PC-9 (cell line): ENCODE measurements at regions of chr12 and their contacts with region 1.

Region 1: GRCh38 chr12:130849561-130850417 is 10.7 kb upstream of the STX2 start:
- DNase-seq: peak; percentile 41 to 70
- H3K4me3 ChIP-seq: no peak overlapping the region
- H3K27ac ChIP-seq: peak overlapping the region; percentile 70
- H3K4me1 ChIP-seq: peaks cover 20% of the 10 kb centered on the region
- H3K27me3 ChIP-seq: no peaks in the 10 kb centered on the region
- CTCF ChIP-seq: no peak

Region 2: GRCh38 chr12:130775953-130776856 is 73.6 kb before region 1 on chr12:
- CTCF ChIA-PET with region 1: interaction called, 10 read pairs
- POLR2A ChIA-PET with region 1: no interaction called
- intact Hi-C with region 1: no loop called
- DNase-seq: peak; percentile 39 to 49
- H3K4me3 ChIP-seq: no peak overlapping the region
- H3K27ac ChIP-seq: no peak overlapping the region
- H3K4me1 ChIP-seq: no peaks in the 10 kb centered on the region
- H3K27me3 ChIP-seq: peaks cover 94% of the 10 kb centered on the region
- CTCF ChIP-seq: no peak

Region 3: DNA sequence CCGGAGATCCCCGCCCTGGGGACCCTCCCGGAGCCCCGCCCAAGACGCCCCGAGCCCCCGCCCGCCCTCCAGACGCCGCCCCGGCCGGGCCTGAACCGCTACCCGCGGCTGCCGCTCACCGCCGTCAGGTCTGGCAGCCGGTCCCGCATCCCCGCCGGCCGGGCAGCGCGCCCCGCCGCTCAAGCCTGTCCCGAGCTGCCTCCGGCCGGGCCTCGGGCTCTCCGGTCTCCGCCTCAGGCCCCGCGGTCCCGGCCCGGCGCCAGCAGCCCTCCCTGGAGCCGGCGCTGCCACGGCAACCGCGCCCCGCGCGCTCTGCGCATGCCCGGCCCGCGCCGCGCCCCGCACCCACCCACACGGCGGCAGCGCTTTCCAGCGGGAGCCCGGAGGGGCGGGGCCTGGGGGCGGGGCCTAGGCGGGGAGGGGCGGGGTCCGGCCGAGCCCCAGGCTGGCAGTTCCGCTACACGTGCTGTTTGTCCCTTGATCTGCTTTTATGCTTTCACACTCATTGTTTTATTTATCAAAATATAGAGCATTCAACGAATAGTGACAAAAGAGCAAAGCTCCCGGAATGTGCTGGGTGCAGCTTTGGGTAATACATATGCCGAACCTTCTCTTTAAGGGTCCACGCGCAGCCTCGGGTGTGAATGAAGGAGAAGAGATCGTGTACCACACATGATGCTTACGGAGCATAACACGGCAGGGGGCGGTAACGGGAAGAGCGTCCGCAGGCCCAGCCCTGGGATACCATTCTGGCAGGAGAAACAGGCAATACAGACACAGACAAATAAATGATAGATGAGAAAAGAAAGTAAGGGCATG is 10.6 kb before region 1 on chr12 and contains the start of gene STX2:
- CTCF ChIA-PET with region 1: interaction called, 3 read pairs
- POLR2A ChIA-PET with region 1: interaction called, 20 read pairs
- intact Hi-C with region 1: no loop called
- DNase-seq: peak in 1 of 2 experiments; percentile 86
- H3K4me3 ChIP-seq: peak within 1 kb of the TSS; percentile 54
- H3K27ac ChIP-seq: no peak within 1 kb of the TSS
- H3K4me1 ChIP-seq: 0 out of 2 replicates have a peak, but pooled peaks cover 5% of the 10 kb centered on the region
- H3K27me3 ChIP-seq: no peaks in the 10 kb centered on the region
- CTCF ChIP-seq: no peak
- total RNA-seq, gene STX2: 8.2 and 9.7 TPM in 2 replicates